WTC11 (cell line): ENCODE measurements at regions of chr3 and their contacts with region 1.

Region 1: DNA sequence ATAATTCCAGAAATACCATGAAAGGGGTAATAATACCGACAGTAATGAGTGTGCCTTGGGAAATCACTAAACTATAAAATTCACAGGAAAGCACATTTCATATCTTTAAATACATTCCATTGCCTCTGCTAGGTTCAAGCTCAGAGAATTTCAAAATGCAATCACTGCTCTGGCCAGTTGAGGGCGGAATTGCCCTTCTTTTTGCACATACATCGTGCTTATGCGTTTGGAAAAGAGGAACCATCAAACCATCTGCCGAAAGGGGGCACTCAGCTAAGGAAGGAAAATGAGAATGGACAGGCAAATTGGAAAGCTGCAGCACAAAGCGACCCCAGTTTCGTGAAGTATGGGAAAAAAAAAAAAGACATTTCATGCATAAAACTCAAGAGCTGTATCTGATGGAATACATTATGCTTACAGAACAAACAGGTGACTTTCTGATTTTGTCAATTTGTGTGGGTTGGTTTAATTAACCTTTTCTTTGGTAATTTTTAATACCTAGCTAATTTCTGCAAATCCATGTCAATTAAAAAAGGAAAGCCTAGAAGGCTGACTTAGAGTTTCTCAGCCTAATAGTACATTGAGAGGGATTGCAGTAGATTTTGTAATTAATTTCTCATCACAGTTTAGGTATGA is 61.4 kb downstream of the TUSC7 start:
- DNase-seq: peak; percentile 83
- ATAC-seq: peak; percentile 91
- H3K4me3 Mint-ChIP-seq: no peak overlapping the region
- H3K27ac Mint-ChIP-seq: no peak overlapping the region
- H3K4me1 Mint-ChIP-seq: peaks cover 21% of the 10 kb centered on the region
- H3K27me3 Mint-ChIP-seq: no peaks in the 10 kb centered on the region
- CTCF ChIP-seq: peak; percentile 81

Region 2: GRCh38 chr3:116579840-116580239 is 191.1 kb before region 1 on chr3:
- CTCF ChIA-PET with region 1: no interaction called
- POLR2A ChIA-PET with region 1: no interaction called
- DNase-seq: peak; percentile 13
- ATAC-seq: no peak
- H3K4me3 Mint-ChIP-seq: no peak overlapping the region
- H3K27ac Mint-ChIP-seq: no peak overlapping the region
- H3K4me1 Mint-ChIP-seq: no peaks in the 10 kb centered on the region
- H3K27me3 Mint-ChIP-seq: no peaks in the 10 kb centered on the region
- CTCF ChIP-seq: no peak

Region 3: DNA sequence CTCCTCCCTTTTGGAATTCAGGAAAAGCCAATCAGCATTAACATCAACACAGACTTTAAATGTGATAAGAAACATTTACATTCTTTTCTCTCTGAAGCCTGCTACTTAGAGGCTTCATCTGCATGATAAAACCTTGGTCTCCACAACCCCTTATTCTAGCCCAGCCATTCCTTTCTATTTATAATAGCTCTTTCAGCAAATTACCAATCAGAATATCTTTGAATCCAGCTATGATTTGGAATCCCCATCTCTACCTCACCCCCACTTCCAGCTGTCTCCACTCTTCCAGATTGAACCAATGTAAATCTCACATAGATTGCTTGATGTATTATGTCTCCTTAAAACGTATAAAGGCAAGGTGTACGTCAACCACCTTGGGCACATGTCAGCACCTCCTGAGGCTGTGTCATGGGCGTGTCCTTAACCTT is 78.3 kb after region 1 on chr3:
- CTCF ChIA-PET with region 1: interaction called, 20 read pairs
- POLR2A ChIA-PET with region 1: no interaction called
- DNase-seq: no peak
- ATAC-seq: peak; percentile 82
- H3K4me3 Mint-ChIP-seq: peak overlapping the region; percentile 20; the same call in 1 of the 2 replicates
- H3K27ac Mint-ChIP-seq: peak overlapping the region; percentile 93
- H3K4me1 Mint-ChIP-seq: peaks cover 60% of the 10 kb centered on the region
- H3K27me3 Mint-ChIP-seq: peaks cover 10% of the 10 kb centered on the region
- CTCF ChIP-seq: no peak

Region 4: GRCh38 chr3:116994351-116994879 is 223.5 kb after region 1 on chr3:
- CTCF ChIA-PET with region 1: interaction called, 11 read pairs
- POLR2A ChIA-PET with region 1: no interaction called
- DNase-seq: no peak
- ATAC-seq: no peak
- H3K4me3 Mint-ChIP-seq: no peak overlapping the region
- H3K27ac Mint-ChIP-seq: no peak overlapping the region
- H3K4me1 Mint-ChIP-seq: no peaks in the 10 kb centered on the region
- H3K27me3 Mint-ChIP-seq: no peaks in the 10 kb centered on the region
- CTCF ChIP-seq: no peak

Region 5: GRCh38 chr3:117045143-117045868 is 274.4 kb after region 1 on chr3:
- CTCF ChIA-PET with region 1: interaction called, 11 read pairs
- POLR2A ChIA-PET with region 1: no interaction called
- DNase-seq: peak; percentile 67
- ATAC-seq: peak; percentile 99
- H3K4me3 Mint-ChIP-seq: no peak overlapping the region
- H3K27ac Mint-ChIP-seq: peak overlapping the region; percentile 60
- H3K4me1 Mint-ChIP-seq: peaks cover 29% of the 10 kb centered on the region
- H3K27me3 Mint-ChIP-seq: no peaks in the 10 kb centered on the region
- CTCF ChIP-seq: no peak

Region 6: GRCh38 chr3:117526470-117527079 is 755.6 kb after region 1 on chr3:
- CTCF ChIA-PET with region 1: interaction called, 20 read pairs
- POLR2A ChIA-PET with region 1: no interaction called
- DNase-seq: peak; percentile 24
- ATAC-seq: no peak; the same call in 1 of the 2 replicates
- H3K4me3 Mint-ChIP-seq: no peak overlapping the region
- H3K27ac Mint-ChIP-seq: no peak overlapping the region
- H3K4me1 Mint-ChIP-seq: peaks cover 10% of the 10 kb centered on the region
- H3K27me3 Mint-ChIP-seq: no peaks in the 10 kb centered on the region
- CTCF ChIP-seq: peak; percentile 41; the same call in 1 of the 2 replicates